ENCODE measurements at regions of chr9 and their contacts with region 1.

Region 1: DNA sequence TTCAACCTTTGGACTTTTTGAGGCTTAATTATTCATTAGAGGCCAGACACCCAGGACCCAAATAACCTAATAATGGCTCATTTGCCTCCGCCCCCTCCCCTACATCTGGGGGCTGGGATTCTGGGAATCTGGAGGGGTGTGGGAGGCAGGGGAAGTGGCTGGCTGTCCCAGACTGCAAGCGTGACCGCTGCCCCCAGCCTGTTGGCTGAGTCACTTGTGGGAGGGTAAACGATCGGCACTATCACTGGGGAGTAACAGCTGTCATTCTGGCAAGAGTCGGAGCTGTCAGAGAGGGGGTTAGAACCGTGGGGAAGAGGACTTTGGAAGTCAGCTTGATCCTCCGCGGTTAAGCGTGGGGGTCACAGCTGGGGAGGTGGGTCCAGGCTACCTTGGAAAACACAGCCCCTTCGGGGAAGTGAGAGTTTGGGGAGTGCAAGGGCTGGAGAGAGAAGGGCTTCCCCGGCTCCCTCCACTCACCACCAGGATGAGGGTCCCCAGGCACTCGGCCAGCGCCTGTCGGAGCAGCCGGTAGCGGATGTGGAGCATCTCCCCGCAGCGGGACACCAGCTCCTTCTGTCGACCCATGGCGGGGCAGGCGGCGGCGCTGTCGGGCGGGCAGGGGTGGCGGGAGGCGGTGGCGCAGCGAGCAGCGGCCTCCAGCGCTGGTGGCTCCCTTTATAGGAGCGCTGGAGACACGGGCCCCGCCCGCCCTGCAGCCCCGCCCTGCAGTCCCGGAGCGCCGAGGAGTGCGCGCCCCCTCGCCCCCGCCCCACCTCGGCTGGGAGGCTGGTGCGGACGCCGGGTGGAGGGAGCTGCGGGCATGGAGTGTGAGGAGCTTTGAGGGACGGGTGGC is at the start of gene AQP3:
- DNase-seq: peak; percentile 47 to 55
- H3K4me3 ChIP-seq: peak within 1 kb of the TSS; percentile 39; the same call in 1 of the 2 replicates
- H3K27ac ChIP-seq: no peak within 1 kb of the TSS
- H3K4me1 ChIP-seq: peaks cover 48% of the 10 kb centered on the region
- H3K27me3 ChIP-seq: no peaks in the 10 kb centered on the region
- CTCF ChIP-seq: no peak
- total RNA-seq, gene AQP3: 9.9 and 15.3 TPM in 2 replicates

Region 2: GRCh38 chr9:33415501-33416038 is 31.6 kb before region 1 on chr9:
- CTCF ChIA-PET with region 1: interaction called, 17 read pairs
- POLR2A ChIA-PET with region 1: no interaction called
- intact Hi-C with region 1: loop called (anchors 5 kb)
- DNase-seq: peak; percentile 80 to 95
- H3K4me3 ChIP-seq: no peak overlapping the region
- H3K27ac ChIP-seq: peak overlapping the region; percentile 22; the same call in 1 of the 2 replicates
- H3K4me1 ChIP-seq: peaks cover 27% of the 10 kb centered on the region
- H3K27me3 ChIP-seq: no peaks in the 10 kb centered on the region
- CTCF ChIP-seq: peak; percentile 83